ENCODE measurements at regions of chr16 and their contacts with region 1.

Region 1: GRCh38 chr16:58487566-58488351 is 12.2 kb upstream of the NDRG4 start:
- DNase-seq: peak; percentile 82
- H3K27ac ChIP-seq: no peak overlapping the region
- CTCF ChIP-seq: peak; percentile 90

Region 2: GRCh38 chr16:58198022-58198683 is 289.6 kb before region 1 on chr16 and contains the start of gene CSNK2A2:
- CTCF ChIA-PET with region 1: no interaction called
- POLR2A ChIA-PET with region 1: no interaction called
- DNase-seq: peak; percentile 84
- H3K27ac ChIP-seq: peak within 1 kb of the TSS; percentile 55
- CTCF ChIP-seq: peak; percentile 78

Region 3: DNA sequence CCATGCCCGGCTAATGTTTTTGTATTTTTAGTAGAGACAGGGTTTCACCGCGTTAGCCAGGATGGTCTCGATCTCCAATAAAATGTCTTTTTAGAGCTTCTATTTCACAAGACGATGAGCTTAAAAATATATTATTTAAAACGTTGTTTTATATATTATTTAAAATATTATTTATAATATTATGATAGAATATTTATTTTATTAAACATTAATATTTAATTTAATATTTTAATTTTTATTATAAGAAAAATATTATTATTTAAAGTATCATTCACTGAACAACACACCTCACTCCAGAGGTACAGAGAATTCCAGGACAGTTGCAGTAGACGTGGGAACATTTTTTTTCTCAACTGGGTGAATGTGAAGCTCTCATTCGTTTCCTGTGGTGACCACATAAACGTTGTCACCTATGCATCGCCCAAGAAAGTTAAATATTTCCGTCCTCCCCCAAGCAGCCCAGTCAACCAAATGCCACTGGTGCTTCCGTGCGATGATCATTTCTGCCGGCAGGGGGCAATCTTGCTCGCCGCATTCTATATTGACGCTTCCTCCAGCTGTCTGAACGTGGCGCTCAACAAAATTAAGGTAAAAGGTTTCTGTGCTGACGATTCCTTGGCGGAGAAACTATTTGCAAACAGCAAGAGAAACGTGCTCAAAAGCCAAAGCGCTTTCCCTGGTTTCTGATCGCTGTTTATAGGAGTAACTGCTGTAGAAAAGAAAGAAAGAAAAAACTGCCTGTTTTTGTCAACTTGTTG is 151.2 kb before region 1 on chr16:
- CTCF ChIA-PET with region 1: interaction called, 62 read pairs
- POLR2A ChIA-PET with region 1: no interaction called
- DNase-seq: peak; percentile 76
- H3K27ac ChIP-seq: no peak overlapping the region
- CTCF ChIP-seq: peak; percentile 91

Region 4: DNA sequence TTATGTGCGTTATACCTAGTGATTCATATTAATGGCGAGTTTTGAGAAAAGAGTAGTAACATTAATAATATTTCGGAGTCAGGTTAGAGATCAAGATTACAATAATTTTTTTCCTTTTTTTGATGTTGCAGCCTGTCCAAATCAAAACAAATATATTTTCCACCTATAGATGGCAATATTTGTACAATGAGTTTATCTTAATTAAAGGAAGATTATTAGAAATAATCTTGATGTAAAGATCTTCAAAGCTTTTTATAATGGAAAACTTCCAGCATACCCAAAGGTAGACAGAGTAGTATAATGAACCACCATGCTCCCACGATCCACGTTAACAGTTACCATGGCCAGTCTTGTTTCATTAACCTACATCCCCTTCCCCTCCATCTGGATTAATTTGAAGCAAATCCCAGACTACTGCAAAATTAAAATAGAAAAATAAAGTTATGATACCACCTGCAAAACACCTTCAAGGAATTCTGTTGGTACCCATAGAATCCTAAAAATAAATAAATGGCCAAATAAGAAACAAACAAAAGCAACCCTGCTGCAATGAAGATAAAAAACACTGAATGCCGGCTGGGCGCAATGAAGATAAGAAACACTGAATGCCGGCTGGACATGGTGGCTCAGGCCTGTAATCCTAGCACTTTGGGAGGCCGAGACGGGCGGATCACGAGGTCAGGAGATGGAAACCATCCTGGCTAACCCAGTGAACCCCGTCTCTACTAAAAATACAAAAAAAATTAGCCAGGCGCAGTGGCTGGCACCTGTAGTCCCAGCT is 142.0 kb before region 1 on chr16:
- CTCF ChIA-PET with region 1: interaction called, 34 read pairs
- POLR2A ChIA-PET with region 1: no interaction called
- DNase-seq: no peak
- H3K27ac ChIP-seq: no peak overlapping the region
- CTCF ChIP-seq: peak; percentile 45; the same call in 1 of the 2 replicates

Region 5: GRCh38 chr16:58360041-58360634 is 127.6 kb before region 1 on chr16:
- CTCF ChIA-PET with region 1: no interaction called
- POLR2A ChIA-PET with region 1: no interaction called
- DNase-seq: no peak
- H3K27ac ChIP-seq: no peak overlapping the region
- CTCF ChIP-seq: no peak

Region 6: GRCh38 chr16:58435779-58436178 is 52.0 kb before region 1 on chr16:
- CTCF ChIA-PET with region 1: no interaction called
- POLR2A ChIA-PET with region 1: no interaction called
- DNase-seq: no peak
- H3K27ac ChIP-seq: no peak overlapping the region
- CTCF ChIP-seq: no peak

Measured in RWPE1 (cell line).